GM10248 (cell line): ENCODE measurements at regions of chr14 and their contacts with region 1.

Region 1: DNA sequence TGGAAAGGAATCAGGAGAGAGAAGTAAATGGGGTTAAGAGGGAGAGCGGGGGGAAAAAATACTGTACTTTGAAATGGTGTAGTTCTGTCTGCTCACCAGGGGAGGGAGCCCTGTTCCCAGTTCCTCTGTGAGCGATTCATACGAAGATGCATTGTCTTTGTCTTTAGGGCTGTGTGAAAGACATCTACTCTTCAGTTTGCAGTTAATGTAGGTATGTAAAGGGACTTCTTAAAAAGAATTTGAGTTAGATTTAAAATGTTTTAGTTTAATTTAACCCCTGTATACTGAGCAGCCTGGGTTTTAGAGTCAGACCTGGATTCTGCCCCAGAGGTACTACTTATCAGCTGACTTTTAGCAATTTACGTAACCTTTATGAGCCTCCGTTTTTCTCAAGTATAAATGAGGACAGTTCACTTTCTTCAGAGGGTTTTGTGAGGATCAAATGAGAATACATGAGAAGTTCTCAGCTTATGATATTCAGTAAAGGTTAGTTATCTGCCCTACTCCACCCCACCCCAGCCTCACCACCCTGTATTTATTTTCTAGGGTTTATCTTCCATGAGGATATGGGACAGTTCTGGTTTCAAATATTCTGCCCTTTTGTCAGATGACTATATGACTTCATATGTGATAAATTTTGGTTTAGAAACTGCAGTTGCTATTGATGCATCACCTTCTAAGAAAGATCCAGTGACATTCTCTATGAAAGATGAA is 82.5 kb upstream of the EVL start:
- DNase-seq: peak; percentile 75
- CTCF ChIP-seq: peak; percentile 83

Region 2: DNA sequence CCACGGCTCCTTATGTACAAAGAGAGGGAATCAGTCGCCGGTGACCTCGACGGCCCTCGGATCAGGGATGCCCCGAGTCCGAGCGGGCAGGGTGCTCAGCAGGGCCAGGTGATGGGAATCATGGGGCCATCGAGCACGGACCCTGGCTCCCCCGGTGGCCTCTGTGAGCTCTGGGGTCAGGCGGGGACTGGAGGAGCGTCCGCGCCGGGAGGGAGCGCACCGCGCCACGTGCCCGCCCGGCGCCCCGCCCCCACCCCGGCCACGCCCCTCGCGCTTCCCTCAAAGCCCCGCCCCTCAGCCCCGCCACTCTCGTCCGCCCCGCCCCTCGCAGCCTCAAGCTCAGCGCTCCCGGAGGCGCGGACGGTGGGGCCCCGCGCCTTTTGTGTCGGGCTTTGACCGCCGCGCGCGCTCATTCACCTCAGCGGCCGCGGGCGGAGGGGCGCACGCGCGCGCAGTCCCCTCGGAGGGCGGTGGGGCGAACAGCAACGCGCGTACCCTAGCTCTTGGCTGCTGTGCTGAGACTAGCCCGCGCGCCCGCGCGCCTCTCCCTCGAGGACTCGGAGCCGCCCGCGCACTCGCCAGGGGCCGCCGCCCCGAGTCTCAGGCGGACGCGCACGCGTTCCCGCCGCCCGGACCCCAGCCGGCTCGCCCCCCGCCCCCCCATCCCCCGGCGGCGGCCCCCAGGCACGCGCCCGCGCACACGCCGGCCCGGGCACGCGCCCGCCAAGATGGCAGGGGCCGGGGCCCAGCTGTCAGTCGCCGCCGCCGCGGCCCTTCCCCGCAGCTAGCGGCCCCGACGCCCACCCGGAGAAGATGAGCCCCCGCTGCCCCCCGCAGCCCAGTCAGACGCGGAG is 11.4 kb before region 1 on chr14:
- CTCF ChIA-PET with region 1: interaction called, 47 read pairs
- POLR2A ChIA-PET with region 1: no interaction called
- DNase-seq: peak; percentile 86
- CTCF ChIP-seq: no peak

Region 3: DNA sequence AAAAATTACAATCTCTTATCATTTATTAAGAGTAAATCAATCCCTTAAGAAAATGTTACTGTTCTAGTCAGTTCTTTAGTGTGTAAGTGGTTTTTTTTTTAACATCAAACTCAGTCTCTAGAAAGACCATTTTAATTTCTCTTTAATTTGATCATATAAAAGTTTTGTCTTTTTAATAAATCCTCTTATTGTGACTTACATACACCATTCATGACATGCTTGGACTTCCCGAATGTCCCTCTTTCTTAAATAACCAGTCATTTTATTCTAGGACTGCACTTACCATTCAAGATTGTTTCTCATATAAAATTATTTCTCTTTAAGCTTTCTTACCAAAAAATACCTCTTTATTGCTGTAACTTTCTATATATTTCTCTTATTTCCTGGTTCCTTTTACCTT is 21.7 kb after region 1 on chr14:
- CTCF ChIA-PET with region 1: interaction called, 22 read pairs
- POLR2A ChIA-PET with region 1: no interaction called
- DNase-seq: no peak
- CTCF ChIP-seq: no peak

Region 4: GRCh38 chr14:100025111-100025510 is 42.4 kb after region 1 on chr14:
- CTCF ChIA-PET with region 1: interaction called, 50 read pairs
- POLR2A ChIA-PET with region 1: no interaction called
- DNase-seq: peak; percentile 53
- CTCF ChIP-seq: peak; percentile 59

Region 5: GRCh38 chr14:100056964-100057795 is 74.5 kb after region 1 on chr14:
- CTCF ChIA-PET with region 1: interaction called, 10 read pairs
- POLR2A ChIA-PET with region 1: interaction called, 11 read pairs
- DNase-seq: peak; percentile 69
- CTCF ChIP-seq: peak; percentile 49

Region 6: GRCh38 chr14:100108042-100108825 is 125.5 kb after region 1 on chr14:
- CTCF ChIA-PET with region 1: interaction called, 51 read pairs
- POLR2A ChIA-PET with region 1: no interaction called
- DNase-seq: peak; percentile 85
- CTCF ChIP-seq: peak; percentile 76

Region 7: DNA sequence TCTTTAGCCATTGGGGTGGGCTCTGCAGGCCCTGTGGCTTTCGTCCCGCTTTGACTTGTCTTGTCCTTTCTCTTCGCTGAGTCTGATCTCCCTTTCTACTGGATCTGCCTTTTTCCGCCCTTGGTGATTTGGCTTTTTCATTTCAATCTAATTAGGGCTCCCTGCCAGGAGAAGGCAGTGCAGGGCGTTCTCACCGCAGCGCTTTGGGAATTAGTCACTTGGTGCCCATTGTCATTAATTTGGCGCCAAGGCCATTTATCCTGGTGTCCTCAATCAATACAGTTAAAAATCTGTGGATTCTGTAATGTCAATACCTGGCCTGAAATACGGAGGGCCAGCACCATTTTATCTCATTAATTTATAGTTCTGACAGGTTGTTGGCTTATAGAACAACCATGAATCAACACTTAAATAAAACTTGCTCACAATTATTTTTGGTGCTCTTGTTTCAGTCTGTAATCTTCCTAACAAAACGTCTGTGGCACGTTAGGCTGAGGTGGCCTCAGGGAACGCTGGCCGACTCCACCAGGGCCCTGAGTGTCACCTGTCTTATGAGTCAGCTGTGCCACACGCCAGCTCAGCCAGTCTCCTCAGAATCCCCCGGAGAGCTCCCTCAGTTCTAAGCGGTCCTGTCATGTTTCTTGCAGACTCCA is 488.9 kb after region 1 on chr14:
- CTCF ChIA-PET with region 1: no interaction called
- POLR2A ChIA-PET with region 1: no interaction called
- DNase-seq: no peak
- CTCF ChIP-seq: no peak